Activated B cell treated with CpG ODN at 0.5 μM for 24 hours (primary cell): ENCODE measurements at regions of chr3 and their contacts with region 1.

Region 1: GRCh38 chr3:112734718-112735350 is 93.9 kb upstream of the CCDC80 start:
- DNase-seq: peak; percentile 46
- ATAC-seq: peak; percentile 81
- H3K4me3 Mint-ChIP-seq: no peak overlapping the region
- H3K27ac Mint-ChIP-seq: no peak overlapping the region
- H3K4me1 Mint-ChIP-seq: peaks cover 28% of the 10 kb centered on the region
- H3K27me3 Mint-ChIP-seq: no peaks in the 10 kb centered on the region
- CTCF ChIP-seq: no peak

Region 2: GRCh38 chr3:112531358-112531781 is 203.5 kb before region 1 on chr3:
- CTCF ChIA-PET with region 1: no interaction called
- POLR2A ChIA-PET with region 1: no interaction called
- intact Hi-C with region 1: no loop called
- DNase-seq: no peak
- ATAC-seq: no peak
- H3K4me3 Mint-ChIP-seq: no peak overlapping the region
- H3K27ac Mint-ChIP-seq: peak overlapping the region; percentile 27
- H3K4me1 Mint-ChIP-seq: peaks cover 3% of the 10 kb centered on the region
- H3K27me3 Mint-ChIP-seq: no peaks in the 10 kb centered on the region
- CTCF ChIP-seq: peak; percentile 9

Region 3: DNA sequence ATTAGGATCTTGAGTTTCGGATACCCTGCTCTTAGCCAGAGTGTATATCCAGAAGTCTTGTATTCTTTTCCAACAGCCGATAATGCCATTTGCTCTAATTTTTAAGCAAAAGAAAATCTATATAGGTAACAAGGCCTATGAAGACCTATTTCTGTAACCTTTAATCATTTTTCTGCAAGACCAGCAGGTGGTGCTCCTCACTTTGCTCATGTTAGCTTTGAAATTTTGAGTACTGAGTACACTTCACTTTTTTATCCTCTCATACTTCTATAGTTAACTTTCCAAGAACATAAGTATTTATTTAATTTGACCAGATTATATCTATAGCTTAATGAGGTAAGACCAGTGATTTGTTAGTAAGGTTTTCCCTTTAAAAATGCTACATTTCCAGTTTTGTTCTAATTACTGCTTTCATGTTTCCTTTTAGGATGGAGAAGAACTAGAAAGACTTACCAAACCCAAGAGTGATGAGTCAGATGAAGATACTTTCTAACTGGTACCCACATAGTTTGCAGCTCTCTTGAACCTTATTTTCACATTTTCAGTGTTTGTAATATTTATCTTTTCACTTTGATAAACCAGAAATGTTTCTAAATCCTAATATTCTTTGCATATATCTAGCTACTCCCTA is 152.5 kb before region 1 on chr3:
- CTCF ChIA-PET with region 1: interaction called, 16 read pairs
- POLR2A ChIA-PET with region 1: no interaction called
- intact Hi-C with region 1: loop called (anchors 1 kb)
- DNase-seq: no peak
- ATAC-seq: no peak
- H3K4me3 Mint-ChIP-seq: no peak overlapping the region
- H3K27ac Mint-ChIP-seq: no peak overlapping the region
- H3K4me1 Mint-ChIP-seq: peaks cover 42% of the 10 kb centered on the region
- H3K27me3 Mint-ChIP-seq: no peaks in the 10 kb centered on the region
- CTCF ChIP-seq: peak; percentile 59

Region 4: DNA sequence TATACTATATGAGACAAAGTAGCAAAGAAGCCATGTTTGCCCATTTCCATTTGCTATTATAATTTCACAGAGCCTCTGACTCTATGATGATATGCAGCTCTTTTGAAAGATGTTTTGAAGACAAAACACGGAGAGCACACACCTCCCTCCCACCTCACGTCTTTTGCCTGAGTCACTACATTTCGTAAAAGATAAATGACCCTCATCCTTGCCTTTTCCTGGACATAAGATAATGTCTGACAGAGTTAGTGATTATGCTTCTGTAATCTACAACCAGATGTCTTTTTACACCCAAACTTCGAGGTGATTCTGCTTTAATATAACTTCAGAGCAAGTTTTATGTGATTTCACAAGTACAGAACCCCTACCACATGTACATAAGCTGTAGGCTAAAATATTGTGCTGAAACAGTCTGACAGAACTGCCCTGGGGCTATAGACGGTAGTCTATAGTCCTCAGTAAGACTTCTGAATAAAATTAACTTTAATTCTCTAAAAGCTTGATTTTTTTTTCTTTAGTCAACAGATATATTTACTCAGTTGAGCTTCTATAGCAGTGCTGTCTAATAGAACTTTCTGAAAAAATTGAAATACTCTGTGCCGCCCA is 11.9 kb after region 1 on chr3:
- CTCF ChIA-PET with region 1: interaction called, 39 read pairs
- POLR2A ChIA-PET with region 1: no interaction called
- intact Hi-C with region 1: no loop called
- DNase-seq: no peak
- ATAC-seq: no peak
- H3K4me3 Mint-ChIP-seq: no peak overlapping the region
- H3K27ac Mint-ChIP-seq: no peak overlapping the region
- H3K4me1 Mint-ChIP-seq: peaks cover 9% of the 10 kb centered on the region
- H3K27me3 Mint-ChIP-seq: no peaks in the 10 kb centered on the region
- CTCF ChIP-seq: no peak

Region 5: DNA sequence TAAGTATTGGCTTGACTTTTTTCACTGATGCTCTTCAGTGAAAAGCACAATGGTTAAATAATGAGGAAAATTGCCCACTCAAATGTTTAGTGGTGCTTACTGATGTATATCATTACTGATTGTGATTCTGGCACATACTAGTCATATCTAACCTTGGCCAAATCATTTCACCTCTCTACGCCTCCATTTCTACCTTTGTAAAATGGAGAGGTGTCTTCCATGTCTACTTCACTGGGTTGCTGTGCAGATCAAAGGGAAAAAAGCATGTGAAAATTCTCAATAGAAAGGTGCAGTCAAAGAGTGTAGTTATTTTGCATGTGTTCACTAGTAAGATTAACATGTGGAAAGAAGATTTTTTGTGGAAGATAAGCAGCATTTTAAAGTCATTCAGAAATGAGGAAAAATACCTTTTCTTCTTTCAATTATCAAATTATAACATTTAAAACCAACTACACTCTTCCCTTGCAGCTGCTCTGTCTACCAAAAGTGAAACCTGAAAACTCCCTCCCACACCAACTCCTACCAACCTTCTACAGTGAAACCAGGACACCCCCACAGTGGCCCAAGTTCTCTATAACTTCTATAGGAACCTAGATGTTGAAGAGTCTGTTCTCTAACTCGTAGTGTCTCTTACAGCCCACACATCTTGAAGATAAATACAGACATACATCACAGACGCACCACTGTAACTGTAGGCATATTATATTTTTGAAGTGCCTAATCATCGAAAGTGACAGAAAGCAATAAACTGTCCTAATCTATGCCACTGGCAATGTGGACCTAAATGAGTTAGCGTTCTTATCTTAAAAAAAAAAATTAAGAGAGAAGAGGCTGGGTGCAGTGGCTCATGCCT is 238.7 kb after region 1 on chr3:
- CTCF ChIA-PET with region 1: interaction called, 159 read pairs
- POLR2A ChIA-PET with region 1: interaction called, 10 read pairs
- intact Hi-C with region 1: no loop called
- DNase-seq: no peak
- ATAC-seq: peak; percentile 75
- H3K4me3 Mint-ChIP-seq: peak overlapping the region; percentile 84
- H3K27ac Mint-ChIP-seq: peak overlapping the region; percentile 76
- H3K4me1 Mint-ChIP-seq: peaks cover 80% of the 10 kb centered on the region
- H3K27me3 Mint-ChIP-seq: no peaks in the 10 kb centered on the region
- CTCF ChIP-seq: no peak

Region 6: DNA sequence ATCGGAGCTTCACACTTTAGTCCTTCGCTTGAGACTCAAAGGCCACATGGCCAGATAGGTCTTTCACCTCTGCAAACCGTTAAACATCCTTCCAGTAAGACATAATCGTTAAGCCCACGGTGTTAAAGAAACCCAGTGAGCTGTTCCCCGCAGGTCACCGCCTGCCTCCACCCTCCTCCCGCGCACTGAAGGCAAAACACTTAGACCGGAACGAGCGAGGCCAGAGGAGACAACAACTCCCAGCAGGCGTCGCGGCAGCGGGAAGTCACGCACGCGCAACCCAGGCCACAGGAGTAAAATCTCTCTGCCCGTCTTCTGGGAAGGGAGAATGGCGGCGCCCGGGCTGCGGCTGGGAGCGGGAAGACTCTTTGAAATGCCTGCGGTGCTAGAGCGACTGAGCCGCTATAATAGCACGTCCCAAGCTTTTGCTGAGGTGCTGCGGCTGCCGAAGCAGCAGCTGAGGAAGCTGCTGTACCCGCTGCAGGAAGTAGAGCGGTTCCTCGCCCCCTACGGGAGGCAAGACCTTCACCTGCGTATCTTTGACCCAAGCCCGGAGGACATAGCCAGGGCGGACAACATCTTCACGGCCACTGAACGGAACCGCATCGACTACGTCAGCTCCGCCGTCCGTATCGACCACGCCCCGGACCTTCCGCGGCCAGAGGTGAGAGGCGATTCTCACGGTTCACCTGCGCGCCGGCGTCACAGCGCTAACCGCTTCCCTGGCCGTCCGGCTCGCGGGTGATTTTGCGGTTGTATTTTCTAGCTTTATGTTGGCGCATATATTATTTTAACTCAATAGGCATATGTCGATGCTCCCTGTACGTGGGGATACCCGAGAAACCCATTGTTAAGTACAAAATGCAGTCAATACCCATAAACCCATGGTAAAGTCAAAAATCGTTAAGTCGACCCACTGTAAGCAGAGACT is 256.1 kb after region 1 on chr3 and contains the start of gene GTPBP8:
- CTCF ChIA-PET with region 1: interaction called, 34 read pairs
- POLR2A ChIA-PET with region 1: interaction called, 7 read pairs
- intact Hi-C with region 1: no loop called
- DNase-seq: peak; percentile 79
- ATAC-seq: peak; percentile 86
- H3K4me3 Mint-ChIP-seq: peak within 1 kb of the TSS; percentile 92
- H3K27ac Mint-ChIP-seq: peak within 1 kb of the TSS; percentile 92
- H3K4me1 Mint-ChIP-seq: peaks cover 27% of the 10 kb centered on the region
- H3K27me3 Mint-ChIP-seq: no peaks in the 10 kb centered on the region
- CTCF ChIP-seq: no peak
- total RNA-seq, gene GTPBP8: 14.3 and 18.1 TPM in 2 replicates

Region 7: GRCh38 chr3:113287803-113288648 is 553.2 kb after region 1 on chr3:
- CTCF ChIA-PET with region 1: interaction called, 15 read pairs
- POLR2A ChIA-PET with region 1: no interaction called
- intact Hi-C with region 1: loop called (anchors 1 kb)
- DNase-seq: no peak
- ATAC-seq: peak; percentile 45
- H3K4me3 Mint-ChIP-seq: no peak overlapping the region
- H3K27ac Mint-ChIP-seq: no peak overlapping the region
- H3K4me1 Mint-ChIP-seq: no peaks in the 10 kb centered on the region
- H3K27me3 Mint-ChIP-seq: no peaks in the 10 kb centered on the region
- CTCF ChIP-seq: peak; percentile 59